Vagina (tissue), 2 donors: ENCODE measurements at regions of chr21 and their contacts with region 1.

Region 1: GRCh38 chr21:38805328-38806152 is at the start of gene ETS2:
- DNase-seq: peak in 1 of 2 donors; percentile 96
- H3K4me3 ChIP-seq: peak within 1 kb of the TSS; percentile 93 to 94
- H3K27ac ChIP-seq: peak within 1 kb of the TSS; percentile 96
- H3K4me1 ChIP-seq: peaks cover 36% of the 10 kb centered on the region
- H3K27me3 ChIP-seq: no peaks in the 10 kb centered on the region
- CTCF ChIP-seq: no peak
- POLR2A ChIP-seq: peak in 1 of 2 donors; percentile 87
- total RNA-seq, gene ETS2: 134 TPM

Region 2: GRCh38 chr21:38733973-38734546 is 71.5 kb before region 1 on chr21:
- intact Hi-C with region 1: loop called (anchors 10 kb)
- DNase-seq: no peak
- H3K4me3 ChIP-seq: peak overlapping the region; percentile 26 to 36
- H3K27ac ChIP-seq: peak overlapping the region; percentile 77
- H3K4me1 ChIP-seq: peaks cover 7% of the 10 kb centered on the region
- H3K27me3 ChIP-seq: no peaks in the 10 kb centered on the region
- CTCF ChIP-seq: peak; percentile 81 to 97 (median 93)
- POLR2A ChIP-seq: peak in 1 of 2 donors; percentile 17

Region 3: GRCh38 chr21:38913120-38913892 is 107.8 kb after region 1 on chr21:
- intact Hi-C with region 1: loop called (anchors 5 kb)
- DNase-seq: peak; percentile 92 to 96
- H3K4me3 ChIP-seq: peak overlapping the region; percentile 10 to 18
- H3K27ac ChIP-seq: peak overlapping the region; percentile 92
- H3K4me1 ChIP-seq: peaks cover 64% of the 10 kb centered on the region
- H3K27me3 ChIP-seq: no peaks in the 10 kb centered on the region
- CTCF ChIP-seq: no peak
- POLR2A ChIP-seq: no peak

Region 4: DNA sequence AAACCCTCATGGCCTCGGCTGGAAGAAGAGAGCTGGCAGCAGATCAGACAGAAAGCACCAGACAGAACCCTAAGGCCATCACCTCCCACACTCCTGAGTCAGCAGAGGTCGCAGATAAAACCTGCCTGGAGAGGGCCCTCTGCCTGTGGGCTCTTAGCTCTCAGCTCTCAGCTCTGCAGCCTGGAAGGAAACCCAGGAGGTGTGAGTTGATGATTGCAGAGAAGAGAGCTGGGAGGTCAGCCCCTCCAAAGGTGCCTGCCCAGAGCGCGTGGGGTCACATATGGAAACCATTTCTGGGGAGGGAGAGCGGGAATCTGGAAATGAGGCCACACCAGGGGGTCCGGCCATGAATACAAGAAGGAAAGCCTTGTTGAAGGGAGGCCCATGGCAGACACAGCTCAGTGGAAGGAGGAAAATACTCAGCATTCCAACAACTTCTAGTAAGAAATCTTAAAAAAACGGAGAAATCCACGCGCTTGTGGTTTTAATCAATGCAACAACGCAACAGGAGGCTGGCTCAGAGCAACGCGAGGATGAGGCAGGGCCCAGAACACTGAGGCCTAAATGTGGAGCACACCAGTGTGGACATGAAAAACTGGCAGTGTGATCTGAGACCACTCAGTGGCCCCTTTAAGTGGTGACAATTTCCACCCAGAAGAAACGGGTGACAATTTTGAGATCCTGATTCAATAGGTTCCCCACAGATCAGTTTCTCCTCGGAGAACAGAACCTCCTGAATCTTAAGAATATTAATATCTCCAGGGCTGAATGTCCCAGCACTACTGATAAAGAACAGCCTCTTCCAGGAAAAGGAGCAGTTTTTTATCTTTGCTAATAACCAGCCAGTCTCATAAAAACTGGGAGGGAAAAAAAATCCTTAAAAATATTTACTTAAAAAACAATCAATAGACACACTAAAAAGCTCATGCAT is 332.0 kb after region 1 on chr21:
- intact Hi-C with region 1: loop called (anchors 2 kb)
- DNase-seq: no peak
- H3K4me3 ChIP-seq: no peak overlapping the region
- H3K27ac ChIP-seq: peak overlapping the region; percentile 63
- H3K4me1 ChIP-seq: peaks cover 19% of the 10 kb centered on the region
- H3K27me3 ChIP-seq: no peaks in the 10 kb centered on the region
- CTCF ChIP-seq: no peak
- POLR2A ChIP-seq: no peak

Region 5: DNA sequence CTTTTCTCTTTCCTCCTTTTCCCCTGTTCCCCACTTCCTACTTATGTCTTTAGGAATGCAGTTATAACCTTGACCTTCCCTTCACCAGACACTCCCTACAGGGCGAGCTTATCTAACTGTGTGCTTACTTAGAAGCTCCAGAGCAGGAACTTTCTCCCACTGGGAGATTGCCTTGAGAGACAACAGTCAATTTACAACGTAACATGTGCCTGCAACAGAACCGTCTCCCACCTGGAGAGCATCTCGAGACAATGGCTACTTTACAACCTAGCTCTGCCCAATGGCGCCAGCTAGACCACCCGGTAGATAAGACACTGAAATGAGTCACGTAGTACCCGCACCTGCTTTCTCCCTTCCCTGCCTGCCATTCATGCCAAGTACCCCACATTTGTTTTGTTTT is 526.6 kb after region 1 on chr21:
- intact Hi-C with region 1: no loop called
- DNase-seq: no peak
- H3K4me3 ChIP-seq: no peak overlapping the region
- H3K27ac ChIP-seq: no peak overlapping the region
- H3K4me1 ChIP-seq: no peaks in the 10 kb centered on the region
- H3K27me3 ChIP-seq: no peaks in the 10 kb centered on the region
- CTCF ChIP-seq: no peak
- POLR2A ChIP-seq: no peak